Naive thymus-derived CD4-positive, alpha-beta T cell (primary cell): ENCODE measurements at regions of chr1 and their contacts with region 1.

Region 1: GRCh38 chr1:40315239-40315794 is 1.8 kb downstream of the COL9A2 start:
- DNase-seq: peak; percentile 70 to 90 (median 86)
- ATAC-seq: peak; percentile 94
- H3K4me3 ChIP-seq: peak overlapping the region; percentile 73
- H3K4me3 Mint-ChIP-seq: peak overlapping the region; percentile 84 to 95 (median 88)
- H3K27ac ChIP-seq: peak overlapping the region; percentile 46
- H3K27ac Mint-ChIP-seq: peak overlapping the region; percentile 43 to 84 (median 76)
- H3K4me1 ChIP-seq: peaks cover 8% of the 10 kb centered on the region in 2 donors
- H3K4me1 Mint-ChIP-seq: peaks cover 11 to 66% (median 34%) of the 10 kb centered on the region in 7 donors
- H3K27me3 ChIP-seq: no peaks in the 10 kb centered on the region
- H3K27me3 Mint-ChIP-seq: peaks cover 7 to 36% (median 13%) of the 10 kb centered on the region in 5 donors

Region 2: GRCh38 chr1:39761525-39762260 is 553.6 kb before region 1 on chr1:
- CTCF ChIA-PET with region 1: no interaction called
- POLR2A ChIA-PET with region 1: no interaction called
- intact Hi-C with region 1: no loop called
- DNase-seq: no peak
- ATAC-seq: no peak
- H3K4me3 ChIP-seq: no peak overlapping the region
- H3K4me3 Mint-ChIP-seq: no peak overlapping the region
- H3K27ac ChIP-seq: no peak overlapping the region
- H3K27ac Mint-ChIP-seq: no peak overlapping the region
- H3K4me1 ChIP-seq: no peaks in the 10 kb centered on the region
- H3K4me1 Mint-ChIP-seq: peaks cover 0 to 5% (median 0%) of the 10 kb centered on the region in 7 donors
- H3K27me3 ChIP-seq: no peaks in the 10 kb centered on the region
- H3K27me3 Mint-ChIP-seq: no peaks in the 10 kb centered on the region

Region 3: GRCh38 chr1:40059338-40059959 is 255.9 kb before region 1 on chr1:
- CTCF ChIA-PET with region 1: no interaction called
- POLR2A ChIA-PET with region 1: no interaction called
- intact Hi-C with region 1: no loop called
- DNase-seq: peak in 7 of 9 donors; percentile 33 to 65 (median 56)
- ATAC-seq: peak; percentile 83
- H3K4me3 ChIP-seq: peak overlapping the region; percentile 21
- H3K4me3 Mint-ChIP-seq: peak overlapping the region; percentile 65 to 90 (median 82)
- H3K27ac ChIP-seq: peak overlapping the region; percentile 77
- H3K27ac Mint-ChIP-seq: peak overlapping the region; percentile 79 to 97 (median 88)
- H3K4me1 ChIP-seq: peaks cover 64 to 87% of the 10 kb centered on the region in 2 donors
- H3K4me1 Mint-ChIP-seq: peaks cover 79 to 99% (median 91%) of the 10 kb centered on the region in 7 donors
- H3K27me3 ChIP-seq: no peaks in the 10 kb centered on the region
- H3K27me3 Mint-ChIP-seq: no peaks in the 10 kb centered on the region

Region 4: DNA sequence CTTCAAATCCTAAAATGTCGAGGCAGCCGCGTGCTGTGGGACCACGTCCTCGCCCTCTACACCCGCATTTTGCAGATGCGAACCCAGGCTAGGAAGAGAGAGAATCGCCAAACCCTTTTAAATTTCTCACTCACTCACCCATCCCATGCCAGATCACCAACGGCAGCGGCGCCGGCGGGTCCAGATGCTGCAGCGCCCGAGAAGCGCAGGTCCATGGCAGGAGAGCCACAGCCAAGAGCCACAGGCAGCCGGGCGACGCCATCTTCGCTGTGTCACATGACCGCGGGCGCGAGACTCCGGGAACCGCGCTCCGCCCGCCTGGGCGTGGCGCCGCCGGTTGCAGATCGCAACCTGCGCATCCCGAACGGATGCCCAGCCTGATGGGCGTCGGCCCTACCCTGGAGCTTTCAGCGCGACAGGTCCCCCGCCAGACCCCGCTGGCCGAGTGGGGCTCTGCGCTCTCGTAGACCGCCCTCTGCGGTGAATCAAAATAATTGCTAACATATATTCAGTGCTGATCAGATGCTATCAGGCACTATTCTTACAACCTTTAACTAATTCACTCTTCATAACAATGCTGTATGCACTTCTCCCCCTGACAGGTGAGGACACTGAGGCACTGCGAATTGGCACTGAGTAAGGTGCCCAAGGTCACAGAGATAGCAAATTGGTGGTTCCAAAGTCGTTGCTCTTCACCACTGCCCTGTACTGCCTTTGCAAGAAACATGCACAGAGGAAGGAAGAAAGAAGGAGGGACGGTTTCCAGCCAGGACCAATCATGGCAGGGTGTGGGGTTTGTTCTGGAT is 218.1 kb before region 1 on chr1 and contains the start of gene PPT1:
- CTCF ChIA-PET with region 1: no interaction called
- POLR2A ChIA-PET with region 1: no interaction called
- intact Hi-C with region 1: loop called in 1 of 2 experiments (anchors 2 kb)
- DNase-seq: peak; percentile 52 to 83 (median 77)
- ATAC-seq: peak; percentile 92
- H3K4me3 ChIP-seq: peak within 1 kb of the TSS; percentile 93
- H3K4me3 Mint-ChIP-seq: peak within 1 kb of the TSS; percentile 86 to 97 (median 94)
- H3K27ac ChIP-seq: peak within 1 kb of the TSS; percentile 71
- H3K27ac Mint-ChIP-seq: peak within 1 kb of the TSS; percentile 90 to 97 (median 94)
- H3K4me1 ChIP-seq: peaks cover 13 to 14% of the 10 kb centered on the region in 2 donors
- H3K4me1 Mint-ChIP-seq: peaks cover 26 to 47% (median 34%) of the 10 kb centered on the region in 7 donors
- H3K27me3 ChIP-seq: no peaks in the 10 kb centered on the region
- H3K27me3 Mint-ChIP-seq: peaks cover 0 to 18% (median 3%) of the 10 kb centered on the region in 5 donors
- total RNA-seq, gene PPT1: 51.8 to 114 (median 62.6) TPM

Region 5: DNA sequence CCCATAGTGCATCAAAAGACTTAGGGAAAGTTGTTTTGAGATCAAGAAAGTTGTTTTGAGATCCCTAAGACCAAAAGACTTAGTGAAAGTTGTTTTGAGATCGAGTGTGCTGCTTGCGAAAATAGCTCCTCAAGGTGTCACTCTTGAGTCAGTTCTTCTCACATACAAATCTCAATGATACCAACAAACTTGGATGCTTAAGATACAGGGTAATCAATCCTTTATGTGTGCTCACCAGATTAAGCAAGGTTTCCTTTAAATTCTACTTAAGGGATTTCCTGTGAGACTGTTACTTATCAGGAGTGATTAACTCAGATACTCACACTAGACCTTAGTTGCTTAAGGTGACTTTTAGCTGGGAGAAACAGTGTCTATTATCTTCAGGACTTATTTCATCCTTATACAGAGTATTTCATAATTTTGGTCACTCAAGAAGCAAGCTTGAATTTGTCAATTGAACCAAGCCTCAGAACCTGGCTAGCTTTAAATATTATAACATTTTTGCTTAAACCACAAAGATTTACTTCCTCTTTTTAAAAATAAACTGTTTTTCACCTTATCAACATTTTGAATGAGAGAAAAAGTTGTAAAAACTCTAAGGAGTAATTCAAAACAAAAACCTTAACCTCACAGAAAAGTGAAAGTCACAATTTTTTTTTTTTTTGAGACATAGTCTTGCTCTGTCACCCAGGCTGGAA is 162.1 kb before region 1 on chr1:
- CTCF ChIA-PET with region 1: interaction called, 21 read pairs
- POLR2A ChIA-PET with region 1: interaction called, 3 read pairs
- intact Hi-C with region 1: loop called (anchors 1 to 2 kb)
- DNase-seq: peak in 7 of 9 donors; percentile 26 to 68 (median 53)
- ATAC-seq: peak; percentile 88
- H3K4me3 ChIP-seq: no peak overlapping the region
- H3K4me3 Mint-ChIP-seq: peak overlapping the region in 7 of 10 donors; percentile 18 to 70 (median 52)
- H3K27ac ChIP-seq: no peak overlapping the region
- H3K27ac Mint-ChIP-seq: peak overlapping the region in 8 of 9 donors; percentile 16 to 88 (median 76)
- H3K4me1 ChIP-seq: no peaks in the 10 kb centered on the region
- H3K4me1 Mint-ChIP-seq: peaks cover 0 to 12% (median 10%) of the 10 kb centered on the region in 7 donors
- H3K27me3 ChIP-seq: no peaks in the 10 kb centered on the region
- H3K27me3 Mint-ChIP-seq: peaks cover 0 to 25% (median 0%) of the 10 kb centered on the region in 5 donors

Region 6: DNA sequence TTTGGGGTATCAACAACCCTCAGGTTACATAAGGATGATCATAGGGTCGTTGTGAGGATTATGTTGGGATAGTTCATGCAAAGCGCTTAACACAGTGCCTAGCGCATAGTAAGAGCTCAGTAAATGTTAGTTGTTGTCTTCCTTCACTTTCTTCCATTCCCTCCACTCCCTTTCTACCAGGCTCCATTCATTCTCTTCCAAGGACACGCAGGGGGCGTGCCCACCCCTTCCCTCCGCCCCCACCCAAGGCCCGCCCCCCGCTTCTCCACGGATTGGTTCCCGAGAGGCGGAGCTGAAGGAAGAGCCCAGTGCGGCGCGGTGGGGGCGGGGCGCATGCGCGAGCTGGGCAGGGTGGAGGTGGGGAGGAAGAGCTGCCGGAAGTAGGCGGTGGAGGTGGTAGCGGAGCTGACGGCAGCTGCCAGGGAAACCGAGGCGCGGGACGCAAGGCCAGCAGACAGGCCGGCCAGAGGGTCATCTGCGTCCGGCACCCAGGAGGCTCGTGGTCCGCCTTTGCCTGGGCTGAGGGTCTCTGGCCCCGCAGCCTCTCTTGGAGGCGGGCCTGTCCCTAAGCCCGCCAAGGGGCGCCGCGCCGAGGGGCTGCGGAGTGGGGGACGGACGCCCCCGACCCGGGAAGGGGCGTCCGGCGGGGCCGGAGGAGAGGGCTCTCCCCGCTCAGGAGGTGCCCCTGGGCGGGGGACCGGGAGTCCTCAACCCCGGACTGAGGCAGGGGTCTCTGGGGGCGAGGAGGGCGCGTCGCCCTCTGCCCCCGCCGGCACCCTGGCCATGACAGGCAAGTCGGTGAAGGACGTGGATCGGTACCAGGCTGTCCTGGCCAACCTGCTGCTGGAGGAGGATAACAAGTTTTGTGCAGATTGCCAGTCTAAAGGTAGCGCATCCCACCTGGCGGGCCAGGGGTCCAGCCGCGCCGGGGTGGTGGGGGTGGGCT is 58.3 kb after region 1 on chr1 and contains the start of gene SMAP2:
- CTCF ChIA-PET with region 1: no interaction called
- POLR2A ChIA-PET with region 1: interaction called, 17 read pairs
- intact Hi-C with region 1: loop called in 1 of 2 experiments (anchors 2 kb)
- DNase-seq: peak; percentile 94 to 98 (median 96)
- ATAC-seq: peak; percentile 91
- H3K4me3 ChIP-seq: peak within 1 kb of the TSS; percentile 99
- H3K4me3 Mint-ChIP-seq: peak within 1 kb of the TSS; percentile 94 to 100 (median 99)
- H3K27ac ChIP-seq: peak within 1 kb of the TSS; percentile 99
- H3K27ac Mint-ChIP-seq: peak within 1 kb of the TSS; percentile 97 to 100 (median 99)
- H3K4me1 ChIP-seq: peaks cover 33 to 36% of the 10 kb centered on the region in 2 donors
- H3K4me1 Mint-ChIP-seq: peaks cover 43 to 66% (median 54%) of the 10 kb centered on the region in 7 donors
- H3K27me3 ChIP-seq: no peaks in the 10 kb centered on the region
- H3K27me3 Mint-ChIP-seq: peaks cover 0 to 4% (median 0%) of the 10 kb centered on the region in 5 donors
- total RNA-seq, gene SMAP2: 144 to 210 (median 187) TPM

Region 7: GRCh38 chr1:40392221-40392620 is 76.9 kb after region 1 on chr1:
- CTCF ChIA-PET with region 1: interaction called, 3 read pairs
- POLR2A ChIA-PET with region 1: interaction called, 11 read pairs
- intact Hi-C with region 1: loop called in 1 of 2 experiments (anchors 5 kb)
- DNase-seq: no peak
- ATAC-seq: no peak
- H3K4me3 ChIP-seq: peak overlapping the region; percentile 4
- H3K4me3 Mint-ChIP-seq: peak overlapping the region; percentile 7 to 94 (median 81)
- H3K27ac ChIP-seq: peak overlapping the region; percentile 99
- H3K27ac Mint-ChIP-seq: peak overlapping the region; percentile 73 to 100 (median 98)
- H3K4me1 ChIP-seq: peaks cover 88 to 91% of the 10 kb centered on the region in 2 donors
- H3K4me1 Mint-ChIP-seq: peaks cover 57 to 94% (median 88%) of the 10 kb centered on the region in 7 donors
- H3K27me3 ChIP-seq: no peaks in the 10 kb centered on the region
- H3K27me3 Mint-ChIP-seq: no peaks in the 10 kb centered on the region

Region 8: GRCh38 chr1:40476924-40477677 is 161.8 kb after region 1 on chr1 and contains the start of gene ZFP69:
- CTCF ChIA-PET with region 1: no interaction called
- POLR2A ChIA-PET with region 1: no interaction called
- intact Hi-C with region 1: no loop called
- DNase-seq: peak; percentile 53 to 70 (median 65)
- ATAC-seq: peak; percentile 91
- H3K4me3 ChIP-seq: peak within 1 kb of the TSS; percentile 85
- H3K4me3 Mint-ChIP-seq: peak within 1 kb of the TSS; percentile 83 to 99 (median 92)
- H3K27ac ChIP-seq: peak within 1 kb of the TSS; percentile 64
- H3K27ac Mint-ChIP-seq: peak within 1 kb of the TSS; percentile 70 to 95 (median 82)
- H3K4me1 ChIP-seq: peaks cover 0 to 5% of the 10 kb centered on the region in 2 donors
- H3K4me1 Mint-ChIP-seq: peaks cover 12 to 34% (median 27%) of the 10 kb centered on the region in 7 donors
- H3K27me3 ChIP-seq: no peaks in the 10 kb centered on the region
- H3K27me3 Mint-ChIP-seq: no peaks in the 10 kb centered on the region
- total RNA-seq, gene ZFP69: 2.7 to 4.3 (median 3.4) TPM

Region 9: GRCh38 chr1:41360993-41361753 is 1045.9 kb after region 1 on chr1 and contains the start of gene FOXO6:
- CTCF ChIA-PET with region 1: no interaction called
- POLR2A ChIA-PET with region 1: no interaction called
- intact Hi-C with region 1: no loop called
- DNase-seq: peak; percentile 87 to 94 (median 91)
- ATAC-seq: peak; percentile 95
- H3K4me3 ChIP-seq: peak within 1 kb of the TSS; percentile 51
- H3K4me3 Mint-ChIP-seq: peak within 1 kb of the TSS; percentile 65 to 86 (median 80)
- H3K27ac ChIP-seq: peak within 1 kb of the TSS; percentile 25
- H3K27ac Mint-ChIP-seq: peak within 1 kb of the TSS in 7 of 9 donors; percentile 3 to 91 (median 73)
- H3K4me1 ChIP-seq: peaks cover 4 to 6% of the 10 kb centered on the region in 2 donors
- H3K4me1 Mint-ChIP-seq: peaks cover 4 to 28% (median 9%) of the 10 kb centered on the region in 7 donors
- H3K27me3 ChIP-seq: peaks cover 5 to 7% of the 10 kb centered on the region in 2 donors
- H3K27me3 Mint-ChIP-seq: peaks cover 10 to 58% (median 35%) of the 10 kb centered on the region in 5 donors
- total RNA-seq, gene FOXO6: 0.66 to 1.3 TPM in 2 of 5 experiments, not detected in the others